ENCODE measurements at regions of chr22 and their contacts with region 1.

Region 1: GRCh38 chr22:20568989-20569769 is 61.8 kb downstream of the MED15 start:
- DNase-seq: peak; percentile 83
- H3K4me3 Mint-ChIP-seq: peak overlapping the region; percentile 21
- H3K27ac Mint-ChIP-seq: peak overlapping the region; percentile 79
- H3K4me1 Mint-ChIP-seq: peaks cover 54% of the 10 kb centered on the region
- H3K27me3 Mint-ChIP-seq: no peaks in the 10 kb centered on the region
- CTCF ChIP-seq: no peak

Region 2: GRCh38 chr22:20507253-20508066 is 61.7 kb before region 1 on chr22 and contains the start of gene MED15:
- CTCF ChIA-PET with region 1: interaction called, 5 read pairs
- intact Hi-C with region 1: loop called (anchors 5 kb)
- DNase-seq: peak; percentile 89
- H3K4me3 Mint-ChIP-seq: peak within 1 kb of the TSS; percentile 79
- H3K27ac Mint-ChIP-seq: peak within 1 kb of the TSS; percentile 77
- H3K4me1 Mint-ChIP-seq: peaks cover 56% of the 10 kb centered on the region
- H3K27me3 Mint-ChIP-seq: no peaks in the 10 kb centered on the region
- CTCF ChIP-seq: no peak
- total RNA-seq, gene MED15: 137 and 144 TPM in 2 replicates

Region 3: DNA sequence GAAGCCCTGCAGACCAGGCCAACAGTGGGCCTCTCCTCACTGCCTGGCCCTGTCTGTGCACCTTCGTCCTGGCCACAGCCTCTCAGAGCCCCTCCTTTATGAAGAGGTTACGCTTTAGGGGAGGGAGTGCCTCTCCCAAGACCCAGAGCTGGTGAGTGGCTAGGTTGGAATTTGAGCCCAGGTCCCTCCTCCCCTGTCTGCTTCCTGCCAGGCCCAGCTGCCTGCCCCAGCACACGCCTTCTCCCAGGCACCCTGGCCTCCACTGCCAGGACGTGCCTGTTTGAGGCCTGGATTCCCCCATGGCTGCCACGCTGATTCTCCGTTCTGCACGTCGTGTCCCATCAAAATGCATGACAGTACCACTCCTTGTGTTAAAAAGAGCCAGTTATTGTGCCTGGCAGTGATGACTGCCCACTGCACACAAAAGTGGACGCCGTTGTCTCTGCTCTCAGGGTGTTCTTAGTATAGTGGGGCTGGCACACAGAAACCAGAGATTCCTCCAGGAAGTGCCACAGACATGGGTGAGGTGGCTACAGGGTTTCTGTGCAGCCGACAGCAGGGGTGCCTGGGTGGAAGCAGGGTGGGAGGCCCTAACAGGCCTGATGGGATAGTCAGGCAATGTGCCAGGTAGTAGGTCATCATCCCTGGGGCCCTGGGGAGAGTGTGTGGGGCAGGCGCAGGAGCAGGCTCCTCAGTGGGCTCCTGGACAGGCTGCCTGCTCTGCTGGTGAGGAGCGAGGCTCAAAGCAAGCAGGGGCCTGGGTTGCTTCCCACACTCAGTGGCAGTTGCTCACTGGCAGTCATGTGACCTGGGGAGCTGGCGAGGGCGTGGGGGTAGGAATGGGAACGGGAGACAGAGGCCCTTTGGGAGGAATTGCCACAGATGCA is 37.6 kb before region 1 on chr22:
- CTCF ChIA-PET with region 1: interaction called, 16 read pairs
- intact Hi-C with region 1: no loop called
- DNase-seq: peak; percentile 84
- H3K4me3 Mint-ChIP-seq: peak overlapping the region; percentile 46
- H3K27ac Mint-ChIP-seq: peak overlapping the region; percentile 81
- H3K4me1 Mint-ChIP-seq: peaks cover 53% of the 10 kb centered on the region
- H3K27me3 Mint-ChIP-seq: no peaks in the 10 kb centered on the region
- CTCF ChIP-seq: no peak

Measured in Calu3 (cell line).